Stomach (tissue), 19 donors: ENCODE measurements at regions of chr5 and their contacts with region 1.

Region 1: GRCh38 chr5:151051066-151051930 is 29.5 kb downstream of the TNIP1 start:
- DNase-seq: peak; percentile 87 to 92
- H3K4me3 ChIP-seq: no peak overlapping the region
- H3K27ac ChIP-seq: peak overlapping the region in 3 of 5 donors; percentile 55 to 64 (median 62)
- H3K4me1 ChIP-seq: peaks cover 4 to 42% (median 7%) of the 10 kb centered on the region in 4 donors
- H3K27me3 ChIP-seq: no peaks in the 10 kb centered on the region
- CTCF ChIP-seq: peak in 5 of 7 experiments; percentile 75 to 96 (median 84)
- EP300 ChIP-seq: no peak
- POLR2A ChIP-seq: no peak

Region 2: GRCh38 chr5:151115274-151115905 is 64.1 kb after region 1 on chr5:
- intact Hi-C with region 1: loop called (anchors 5 kb)
- DNase-seq: peak; percentile 84 to 87
- H3K4me3 ChIP-seq: no peak overlapping the region
- H3K27ac ChIP-seq: peak overlapping the region in 2 of 5 donors; percentile 2 to 40
- H3K4me1 ChIP-seq: peaks cover 0 to 23% (median 11%) of the 10 kb centered on the region in 4 donors
- H3K27me3 ChIP-seq: no peaks in the 10 kb centered on the region
- CTCF ChIP-seq: peak in 6 of 7 experiments; percentile 34 to 97 (median 93)
- EP300 ChIP-seq: no peak
- POLR2A ChIP-seq: no peak

Region 3: DNA sequence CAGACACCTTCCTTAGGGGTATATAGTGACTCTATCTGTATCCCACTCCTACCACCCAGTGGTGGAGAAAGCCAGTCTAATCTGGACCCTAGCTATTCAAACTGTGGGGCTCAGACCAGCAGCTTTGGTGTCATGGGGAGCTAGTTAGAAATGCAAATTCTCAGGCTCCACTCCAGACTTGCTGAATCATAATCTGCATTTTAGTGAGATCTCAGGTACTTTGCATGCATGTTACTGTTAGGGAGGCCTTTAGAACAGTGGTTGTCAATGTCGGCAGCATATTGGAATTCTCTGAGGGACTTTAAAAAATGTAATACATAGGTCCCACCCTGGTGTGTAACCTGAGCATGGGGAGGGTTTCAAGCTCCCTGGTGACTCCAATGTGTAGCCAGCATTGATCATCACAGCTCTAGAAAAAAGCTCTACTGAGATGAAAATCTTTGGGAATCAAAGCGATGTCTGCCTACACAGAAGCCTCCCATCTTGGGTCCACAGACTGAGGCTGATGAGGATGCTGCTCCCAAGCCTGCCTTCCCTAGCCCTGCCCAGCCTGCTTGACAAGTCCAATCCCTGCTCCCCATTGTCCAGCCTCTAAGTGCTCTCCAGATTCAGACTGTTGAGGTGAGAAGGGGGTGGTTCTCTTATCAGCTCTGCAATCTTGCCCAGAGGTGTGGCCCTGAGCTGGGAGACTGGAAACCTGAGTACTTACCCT is 189.8 kb after region 1 on chr5:
- intact Hi-C with region 1: loop called (anchors 10 kb)
- DNase-seq: no peak
- H3K4me3 ChIP-seq: no peak overlapping the region
- H3K27ac ChIP-seq: no peak overlapping the region
- H3K4me1 ChIP-seq: peaks cover 0 to 12% (median 6%) of the 10 kb centered on the region in 4 donors
- H3K27me3 ChIP-seq: no peaks in the 10 kb centered on the region
- CTCF ChIP-seq: no peak
- EP300 ChIP-seq: no peak
- POLR2A ChIP-seq: no peak